Right ventricle myocardium inferior (tissue), 1 donor: ENCODE measurements at regions of chr3 and their contacts with region 1.

Region 1: GRCh38 chr3:47420511-47421484 is 40.0 kb downstream of the PTPN23 start:
- DNase-seq: peak; percentile 88
- ATAC-seq: peak; percentile 81

Region 2: DNA sequence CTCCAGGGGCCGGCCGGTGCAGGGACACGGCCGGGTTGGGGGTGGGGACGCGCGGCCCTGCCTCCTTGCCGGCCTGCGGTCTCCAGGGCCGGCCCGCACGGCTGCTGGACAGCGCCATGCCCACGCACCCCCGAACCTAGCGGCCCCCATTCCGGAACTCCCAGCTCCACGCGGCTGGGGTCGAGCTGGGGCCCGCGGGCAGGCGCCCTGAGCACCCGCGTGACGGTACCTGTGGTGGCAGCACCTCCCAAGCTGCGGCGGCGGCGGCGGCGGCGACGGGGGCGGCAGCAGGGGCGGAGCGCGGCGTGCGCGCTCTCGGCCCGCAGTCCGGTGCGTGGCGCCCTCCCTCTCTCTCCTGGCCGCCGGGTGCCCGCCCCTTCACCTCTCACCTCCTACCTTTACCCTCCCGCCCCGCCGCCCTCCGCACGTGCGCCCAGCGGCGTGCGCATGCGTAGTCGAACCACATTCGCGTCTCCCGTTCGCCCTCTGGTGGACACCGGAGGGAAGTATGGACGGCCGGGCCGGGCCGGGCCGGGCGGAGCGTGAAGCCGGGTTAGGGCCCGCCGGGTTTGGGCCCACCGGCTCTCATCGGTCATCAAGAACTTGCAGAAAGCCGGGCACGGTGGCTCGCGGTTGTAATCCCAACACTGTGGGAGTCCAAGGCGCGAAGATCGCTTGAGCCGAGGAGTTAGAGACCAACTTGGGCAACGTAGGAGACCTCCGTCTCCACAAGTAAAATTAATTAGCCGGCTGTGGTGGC is 55.0 kb after region 1 on chr3 and contains the start of gene SCAP:
- intact Hi-C with region 1: loop called (anchors 1 kb)
- DNase-seq: peak; percentile 97
- ATAC-seq: peak; percentile 98
- total RNA-seq, gene SCAP: 51.7 TPM

Region 3: GRCh38 chr3:47513125-47513929 is 92.5 kb after region 1 on chr3 and contains the start of gene ELP6:
- intact Hi-C with region 1: loop called (anchors 1 kb)
- DNase-seq: peak; percentile 98
- ATAC-seq: peak; percentile 99
- total RNA-seq, gene ELP6: 20.3 TPM